PC-9 (cell line): ENCODE measurements at regions of chr4 and their contacts with region 1.

Region 1: GRCh38 chr4:125389713-125390112 is 75.0 kb downstream of the FAT4 start:
- DNase-seq: peak; percentile 4 to 46
- H3K4me3 ChIP-seq: no peak overlapping the region
- H3K27ac ChIP-seq: no peak overlapping the region
- H3K4me1 ChIP-seq: no peaks in the 10 kb centered on the region
- H3K27me3 ChIP-seq: no peaks in the 10 kb centered on the region
- CTCF ChIP-seq: no peak

Region 2: DNA sequence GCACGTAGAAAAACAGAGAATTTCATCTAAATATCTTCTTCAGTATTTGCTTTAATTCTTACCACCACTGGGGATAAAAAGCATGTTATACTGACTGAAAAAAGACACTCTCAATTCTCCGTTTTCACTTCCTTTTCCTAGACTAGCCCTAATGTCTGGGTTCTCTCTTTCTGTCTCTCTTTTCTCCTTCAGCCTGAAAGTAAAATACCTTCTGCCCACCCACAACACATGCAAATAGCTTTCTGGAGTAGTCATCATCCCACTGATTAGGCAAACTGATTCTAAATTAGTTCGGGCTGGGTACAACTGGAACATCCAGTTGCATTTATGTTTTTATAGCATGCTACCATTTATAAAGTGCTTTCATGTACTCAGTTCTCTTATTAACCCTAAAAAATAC is 534.7 kb before region 1 on chr4:
- CTCF ChIA-PET with region 1: no interaction called
- POLR2A ChIA-PET with region 1: no interaction called
- intact Hi-C with region 1: no loop called
- DNase-seq: no peak
- H3K4me3 ChIP-seq: no peak overlapping the region
- H3K27ac ChIP-seq: no peak overlapping the region
- H3K4me1 ChIP-seq: no peaks in the 10 kb centered on the region
- H3K27me3 ChIP-seq: no peaks in the 10 kb centered on the region
- CTCF ChIP-seq: no peak

Region 3: DNA sequence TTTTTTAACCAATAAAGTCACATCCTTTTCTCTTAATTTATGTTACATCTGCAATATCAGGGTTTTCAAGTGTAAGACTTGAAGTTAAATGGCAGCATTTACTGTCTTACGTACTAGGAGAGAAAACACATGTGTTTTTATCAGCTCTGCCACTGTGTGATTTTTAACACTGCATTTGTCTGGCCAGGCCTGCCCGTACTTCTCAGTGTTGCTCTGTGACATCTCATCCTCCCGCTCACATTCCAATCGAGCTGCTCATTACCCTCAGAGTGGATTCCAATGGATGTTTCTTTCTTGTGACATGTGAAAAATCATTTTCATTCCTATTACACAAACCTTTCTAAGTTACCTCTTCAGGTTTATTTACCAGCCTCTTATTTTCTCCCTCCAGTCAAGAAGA is 345.4 kb after region 1 on chr4:
- CTCF ChIA-PET with region 1: no interaction called
- POLR2A ChIA-PET with region 1: no interaction called
- intact Hi-C with region 1: loop called (anchors 10 kb)
- DNase-seq: peak; percentile 63 to 66
- H3K4me3 ChIP-seq: no peak overlapping the region
- H3K27ac ChIP-seq: no peak overlapping the region
- H3K4me1 ChIP-seq: 0 out of 2 replicates have a peak, but pooled peaks cover 4% of the 10 kb centered on the region
- H3K27me3 ChIP-seq: no peaks in the 10 kb centered on the region
- CTCF ChIP-seq: no peak